ENCODE measurements at regions of chr16 and their contacts with region 1.

Region 1: DNA sequence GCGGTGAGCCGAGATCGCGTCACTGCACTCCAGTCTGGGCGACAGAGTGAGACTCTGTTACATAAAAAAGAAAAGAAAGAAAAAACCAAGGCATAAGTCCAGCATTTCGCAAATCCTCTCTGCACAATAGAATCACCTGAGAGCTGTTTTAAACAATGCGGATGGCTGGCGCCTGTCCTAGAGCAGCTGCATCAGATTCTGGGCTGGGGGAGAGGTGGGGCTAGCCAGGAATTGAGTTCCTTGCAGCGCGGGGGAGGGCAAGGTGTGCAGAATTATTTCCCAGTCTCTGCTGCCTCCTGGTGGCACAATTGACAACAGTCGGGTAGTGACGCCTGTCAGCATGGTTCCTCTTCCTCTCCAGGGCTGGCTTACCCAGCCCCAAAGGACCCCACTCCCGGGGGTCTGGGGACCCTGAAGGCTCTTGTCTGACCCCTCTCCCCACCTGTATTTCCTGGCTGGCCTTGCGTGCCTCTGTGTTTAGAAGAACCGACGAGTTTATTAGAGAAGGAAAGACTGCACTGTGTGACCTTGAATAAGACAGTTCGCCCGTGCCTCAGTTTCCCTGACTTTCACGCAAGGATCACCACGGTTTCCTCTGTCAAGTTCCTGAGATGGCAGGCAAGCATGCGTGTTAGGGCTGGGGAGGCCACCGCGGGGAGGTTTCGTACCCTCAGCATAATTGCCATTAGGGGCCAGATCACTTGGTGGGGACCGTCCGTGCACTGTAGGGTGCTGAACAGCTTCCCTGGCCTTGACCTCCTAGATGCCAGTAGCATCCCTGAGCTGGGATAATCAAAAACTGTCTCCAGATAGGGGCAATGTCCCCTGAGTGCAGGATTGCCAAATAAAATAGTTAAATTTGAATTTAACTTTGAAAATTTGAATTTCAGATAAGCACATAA is 41.0 kb upstream of the PLCG2 start:
- DNase-seq: peak; percentile 65
- H3K4me3 ChIP-seq: peak overlapping the region; percentile 27
- CTCF ChIP-seq: peak; percentile 72

Region 2: DNA sequence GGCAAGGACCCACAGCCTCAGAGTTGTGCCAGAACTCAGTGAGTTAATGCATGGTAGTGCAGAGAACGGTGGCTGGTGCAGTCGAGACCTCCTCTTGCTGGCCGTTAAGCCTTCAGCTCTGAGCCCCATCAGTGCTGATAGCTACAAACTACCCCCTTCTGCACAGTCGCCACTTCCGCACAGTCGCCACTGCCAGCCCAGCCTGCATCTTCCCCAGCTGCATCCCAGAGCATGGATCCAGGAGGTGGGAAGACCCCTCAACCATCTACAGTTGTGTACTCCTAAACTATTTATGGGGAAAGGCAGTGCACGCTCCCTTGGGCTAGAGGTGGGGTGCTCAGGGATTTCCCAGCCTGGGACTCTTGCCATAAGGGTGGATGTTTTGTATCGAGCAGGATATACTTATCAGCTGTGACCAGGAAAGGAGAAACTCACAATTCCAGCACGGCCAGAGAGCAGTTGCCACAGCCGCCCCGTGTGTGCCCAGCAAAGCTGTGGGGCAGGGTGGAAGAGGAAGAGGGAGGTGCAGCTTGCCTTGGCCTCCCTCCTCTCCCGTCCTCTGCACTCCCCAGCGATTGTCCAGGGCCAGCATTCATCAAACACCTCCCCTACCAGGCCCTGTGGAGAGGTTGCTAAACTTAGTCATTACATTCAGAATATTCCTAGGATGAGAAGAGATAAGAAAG is 343.0 kb before region 1 on chr16:
- in situ Hi-C with region 1: loop called (anchors 10 kb)
- DNase-seq: no peak
- H3K4me3 ChIP-seq: no peak overlapping the region
- CTCF ChIP-seq: no peak